Activated CD4-positive, alpha-beta T cell treated with anti-CD3 and anti-CD28 coated beads, Interleukin-2, amount 10 ng/mL, durations not matched to agents 7 days and 5 days (primary cell): ENCODE measurements at regions of chr5 and their contacts with region 1.

Region 1: DNA sequence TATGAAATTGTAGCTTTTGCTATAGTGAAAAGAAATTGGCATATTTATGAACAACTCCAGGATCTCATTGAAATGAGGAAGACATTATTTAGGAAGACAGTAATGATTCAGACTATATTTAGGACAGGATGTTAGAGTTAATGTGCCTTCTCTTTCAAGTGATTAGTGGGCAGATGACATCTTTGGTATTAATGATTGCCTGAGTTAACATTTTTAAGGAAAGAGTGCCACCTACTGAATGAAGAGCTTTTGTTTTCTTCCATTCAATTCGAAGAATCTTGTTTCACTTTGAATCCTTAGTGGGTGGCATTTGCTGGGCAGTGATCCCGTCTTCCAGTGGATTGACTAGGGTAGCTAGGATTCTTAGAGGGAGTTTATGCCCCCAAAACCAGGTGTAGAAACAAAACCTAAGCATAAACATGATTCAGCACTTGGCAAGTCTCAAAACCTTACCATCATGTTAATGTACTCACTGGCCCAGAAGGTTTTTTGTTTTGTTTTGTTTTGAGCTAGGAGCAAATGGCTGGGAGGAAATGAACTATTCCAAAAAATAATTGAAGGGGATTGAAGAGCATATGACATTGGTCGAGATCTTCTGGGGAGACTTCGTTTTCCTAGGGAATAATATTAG is 23.2 kb downstream of the MAP3K1 start:
- DNase-seq: no peak
- H3K4me3 Mint-ChIP-seq: peak overlapping the region; percentile 9
- H3K27ac Mint-ChIP-seq: peak overlapping the region; percentile 25
- H3K4me1 Mint-ChIP-seq: peaks cover 75% of the 10 kb centered on the region
- H3K27me3 Mint-ChIP-seq: no peaks in the 10 kb centered on the region

Region 2: GRCh38 chr5:56270568-56271392 is 567.7 kb before region 1 on chr5:
- CTCF ChIA-PET with region 1: interaction called, 42 read pairs
- POLR2A ChIA-PET with region 1: no interaction called
- DNase-seq: peak; percentile 77
- H3K4me3 Mint-ChIP-seq: no peak overlapping the region
- H3K27ac Mint-ChIP-seq: peak overlapping the region; percentile 22
- H3K4me1 Mint-ChIP-seq: peaks cover 21% of the 10 kb centered on the region
- H3K27me3 Mint-ChIP-seq: no peaks in the 10 kb centered on the region

Region 3: GRCh38 chr5:56328753-56329560 is 509.6 kb before region 1 on chr5:
- CTCF ChIA-PET with region 1: interaction called, 5 read pairs
- POLR2A ChIA-PET with region 1: interaction called, 12 read pairs
- DNase-seq: peak; percentile 67
- H3K4me3 Mint-ChIP-seq: peak overlapping the region; percentile 57
- H3K27ac Mint-ChIP-seq: peak overlapping the region; percentile 92
- H3K4me1 Mint-ChIP-seq: peaks cover 64% of the 10 kb centered on the region
- H3K27me3 Mint-ChIP-seq: no peaks in the 10 kb centered on the region

Region 4: DNA sequence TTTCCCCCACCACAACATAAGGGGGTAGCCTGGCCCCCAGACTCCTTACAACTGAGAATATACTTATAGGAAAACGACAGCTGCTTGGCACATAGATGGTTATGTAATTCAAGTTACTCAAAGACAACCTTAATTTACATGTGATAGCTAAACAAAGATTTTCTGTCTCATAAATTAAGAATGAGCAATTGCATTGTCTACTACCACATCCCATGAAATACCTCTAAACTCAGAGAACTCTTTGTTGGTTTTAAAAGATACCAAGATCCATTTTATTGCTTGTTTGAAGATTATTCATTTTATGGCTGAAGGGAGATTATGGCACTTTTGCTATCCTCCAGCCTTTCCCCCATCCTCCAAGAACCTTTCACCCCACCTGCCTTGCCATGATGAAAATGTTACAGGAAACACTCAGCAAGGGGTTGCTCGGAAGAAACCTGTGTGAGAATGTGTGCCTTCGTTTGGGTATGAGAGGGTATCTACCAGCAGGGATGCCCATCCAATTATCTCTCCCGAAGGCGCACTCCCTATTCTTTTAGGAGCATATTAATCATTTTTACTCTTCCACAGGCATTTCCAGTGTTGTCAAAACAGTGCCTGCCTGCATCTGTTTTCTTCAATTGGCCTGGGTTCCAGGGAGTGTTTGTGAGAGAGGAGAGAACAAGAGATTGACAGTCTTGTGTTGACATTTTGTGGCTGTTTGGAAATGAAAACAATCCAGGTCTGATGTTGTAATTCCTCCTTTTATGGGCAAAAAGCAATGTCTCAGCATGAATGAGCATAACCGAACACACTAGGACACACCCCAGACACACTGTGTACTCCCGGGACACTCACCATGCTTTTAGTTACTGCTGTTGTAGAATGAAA is 397.4 kb before region 1 on chr5:
- CTCF ChIA-PET with region 1: no interaction called
- POLR2A ChIA-PET with region 1: no interaction called
- DNase-seq: no peak
- H3K4me3 Mint-ChIP-seq: no peak overlapping the region
- H3K27ac Mint-ChIP-seq: no peak overlapping the region
- H3K4me1 Mint-ChIP-seq: peaks cover 6% of the 10 kb centered on the region
- H3K27me3 Mint-ChIP-seq: no peaks in the 10 kb centered on the region

Region 5: DNA sequence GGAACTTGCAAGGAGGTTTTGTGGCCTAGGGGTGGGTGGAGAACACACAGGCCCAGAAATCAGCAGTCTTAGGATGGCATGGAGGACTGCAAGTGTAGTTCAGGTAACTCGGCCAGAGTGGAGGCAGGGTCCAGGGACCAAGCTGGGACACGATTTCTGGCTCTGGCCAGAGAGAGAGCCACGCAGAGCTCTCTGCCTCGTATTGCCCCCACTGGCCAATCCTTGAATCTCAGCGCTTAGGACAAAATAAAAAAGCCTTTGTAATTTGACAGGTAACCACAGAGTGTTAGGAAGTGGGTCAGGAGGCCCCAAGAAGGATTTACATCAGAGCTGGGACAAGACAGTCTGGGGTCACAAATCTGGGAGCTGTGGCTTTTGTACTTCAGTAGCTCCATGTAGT is 11.5 kb before region 1 on chr5:
- CTCF ChIA-PET with region 1: interaction called, 20 read pairs
- POLR2A ChIA-PET with region 1: no interaction called
- DNase-seq: no peak
- H3K4me3 Mint-ChIP-seq: no peak overlapping the region
- H3K27ac Mint-ChIP-seq: no peak overlapping the region
- H3K4me1 Mint-ChIP-seq: peaks cover 87% of the 10 kb centered on the region
- H3K27me3 Mint-ChIP-seq: no peaks in the 10 kb centered on the region